T-cell (primary cell): ENCODE measurements at regions of chr5 and their contacts with region 1.

Region 1: DNA sequence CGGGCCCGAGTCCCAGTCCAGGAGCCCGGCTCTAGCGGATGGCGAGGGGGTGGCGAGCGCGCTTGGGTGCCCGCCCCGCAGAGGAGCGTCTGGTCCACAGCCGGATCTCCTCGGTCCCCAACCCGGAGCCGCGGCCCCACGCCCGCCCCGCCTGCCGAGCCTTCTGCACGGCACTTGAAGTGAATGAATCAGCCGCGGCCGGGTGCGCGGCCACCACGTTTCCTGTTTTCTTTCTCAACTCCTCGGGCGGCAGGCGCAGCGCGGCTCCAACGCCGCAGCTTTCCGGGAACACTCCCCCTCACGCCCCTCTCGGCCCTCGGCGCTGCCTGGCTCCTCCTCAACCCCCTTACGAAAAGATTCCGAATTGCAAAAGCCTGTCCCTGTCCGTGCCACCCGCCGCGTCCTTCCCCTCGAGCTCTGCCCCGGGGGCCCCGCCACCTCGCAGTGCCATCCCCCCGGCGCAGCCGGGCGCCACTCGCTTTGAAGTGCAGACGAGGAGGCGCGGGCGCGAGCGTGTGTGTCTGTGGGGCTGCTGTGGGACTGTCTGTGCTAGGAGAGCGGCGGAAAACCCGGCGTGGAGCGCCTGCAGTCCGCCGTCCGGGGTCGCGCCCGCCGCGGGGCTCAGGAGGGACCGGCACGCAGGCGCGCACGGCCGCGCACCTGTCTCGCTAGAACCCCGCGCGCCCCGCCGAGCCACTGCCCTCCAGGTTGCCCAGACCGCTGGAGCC is 456.6 kb downstream of the RAB3C start:
- DNase-seq: peak; percentile 83 to 94 (median 91)
- ATAC-seq: peak; percentile 82 to 86 (median 84)
- H3K4me3 ChIP-seq: peak overlapping the region; percentile 90 to 98
- H3K4me3 Mint-ChIP-seq: peak overlapping the region; percentile 91 to 98 (median 95)
- H3K27ac ChIP-seq: peak overlapping the region; percentile 87
- H3K27ac Mint-ChIP-seq: peak overlapping the region; percentile 100
- H3K4me1 ChIP-seq: peaks cover 16 to 45% of the 10 kb centered on the region in 2 experiments
- H3K4me1 Mint-ChIP-seq: peaks cover 58 to 67% (median 64%) of the 10 kb centered on the region in 3 donors
- H3K27me3 ChIP-seq: no peaks in the 10 kb centered on the region
- H3K27me3 Mint-ChIP-seq: no peaks in the 10 kb centered on the region

Region 2: DNA sequence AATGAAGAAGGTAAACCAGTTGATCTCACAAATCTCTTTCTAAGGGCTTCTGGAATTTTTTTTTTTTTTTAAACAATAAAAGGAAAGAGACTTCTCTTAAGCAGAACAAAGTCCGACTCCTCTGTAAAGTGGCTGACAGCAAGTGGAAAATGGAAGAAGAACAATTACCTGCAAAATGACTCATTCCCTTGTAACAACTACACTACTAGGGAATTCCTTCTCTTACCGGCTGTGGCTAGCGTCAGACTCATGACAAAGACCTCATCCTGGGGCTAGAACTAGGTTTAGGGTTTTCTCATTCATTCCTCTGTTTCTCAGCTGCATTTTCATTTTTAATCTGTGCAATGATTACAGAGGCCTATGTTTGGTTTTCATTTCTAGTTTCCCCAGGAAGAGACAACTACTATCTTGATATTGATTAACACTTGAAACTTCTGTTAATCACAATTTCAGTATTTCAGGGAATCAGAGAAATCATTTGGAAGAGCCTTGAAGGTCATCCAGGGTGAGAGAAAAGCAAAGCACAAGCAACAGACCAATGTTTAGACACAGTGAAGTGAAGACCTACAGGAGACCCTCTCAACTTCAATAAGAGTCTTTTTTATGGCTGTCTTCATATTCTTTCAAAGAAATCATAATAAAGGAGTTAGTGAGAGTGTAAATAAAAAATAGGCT is 18.7 kb before region 1 on chr5:
- CTCF ChIA-PET with region 1: interaction called in 1 of 2 experiments, 3 read pairs
- POLR2A ChIA-PET with region 1: interaction called, 7 to 12 read pairs
- DNase-seq: peak in 1 of 35 experiments; percentile 21
- ATAC-seq: peak in 1 of 4 experiments; percentile 42
- H3K4me3 ChIP-seq: no peak overlapping the region
- H3K4me3 Mint-ChIP-seq: peak overlapping the region in 1 of 3 donors; percentile 31
- H3K27ac ChIP-seq: no peak overlapping the region
- H3K27ac Mint-ChIP-seq: peak overlapping the region; percentile 33 to 53
- H3K4me1 ChIP-seq: peaks cover 7 to 8% of the 10 kb centered on the region in 2 experiments
- H3K4me1 Mint-ChIP-seq: peaks cover 50 to 68% (median 59%) of the 10 kb centered on the region in 3 donors
- H3K27me3 ChIP-seq: no peaks in the 10 kb centered on the region
- H3K27me3 Mint-ChIP-seq: no peaks in the 10 kb centered on the region

Region 3: GRCh38 chr5:59126708-59127573 is 87.5 kb after region 1 on chr5:
- CTCF ChIA-PET with region 1: interaction called, 17 to 53 read pairs
- POLR2A ChIA-PET with region 1: interaction called, 3 to 14 read pairs
- DNase-seq: peak in 11 of 35 experiments; percentile 2 to 71 (median 13)
- ATAC-seq: peak; percentile 7 to 23 (median 16)
- H3K4me3 ChIP-seq: peak overlapping the region; percentile 31 to 59
- H3K4me3 Mint-ChIP-seq: no peak overlapping the region
- H3K27ac ChIP-seq: peak overlapping the region; percentile 82
- H3K27ac Mint-ChIP-seq: no peak overlapping the region
- H3K4me1 ChIP-seq: peaks cover 36 to 59% of the 10 kb centered on the region in 2 experiments
- H3K4me1 Mint-ChIP-seq: peaks cover 7 to 17% (median 15%) of the 10 kb centered on the region in 3 donors
- H3K27me3 ChIP-seq: no peaks in the 10 kb centered on the region
- H3K27me3 Mint-ChIP-seq: no peaks in the 10 kb centered on the region

Region 4: GRCh38 chr5:59133682-59134261 is 94.3 kb after region 1 on chr5:
- CTCF ChIA-PET with region 1: interaction called, 17 to 49 read pairs
- POLR2A ChIA-PET with region 1: interaction called in 1 of 2 experiments, 8 read pairs
- DNase-seq: no peak
- ATAC-seq: no peak
- H3K4me3 ChIP-seq: no peak overlapping the region
- H3K4me3 Mint-ChIP-seq: no peak overlapping the region
- H3K27ac ChIP-seq: no peak overlapping the region
- H3K27ac Mint-ChIP-seq: peak overlapping the region in 1 of 2 donors; percentile 73
- H3K4me1 ChIP-seq: peaks cover 0 to 16% of the 10 kb centered on the region in 2 experiments
- H3K4me1 Mint-ChIP-seq: peaks cover 32 to 43% (median 34%) of the 10 kb centered on the region in 3 donors
- H3K27me3 ChIP-seq: no peaks in the 10 kb centered on the region
- H3K27me3 Mint-ChIP-seq: no peaks in the 10 kb centered on the region

Region 5: DNA sequence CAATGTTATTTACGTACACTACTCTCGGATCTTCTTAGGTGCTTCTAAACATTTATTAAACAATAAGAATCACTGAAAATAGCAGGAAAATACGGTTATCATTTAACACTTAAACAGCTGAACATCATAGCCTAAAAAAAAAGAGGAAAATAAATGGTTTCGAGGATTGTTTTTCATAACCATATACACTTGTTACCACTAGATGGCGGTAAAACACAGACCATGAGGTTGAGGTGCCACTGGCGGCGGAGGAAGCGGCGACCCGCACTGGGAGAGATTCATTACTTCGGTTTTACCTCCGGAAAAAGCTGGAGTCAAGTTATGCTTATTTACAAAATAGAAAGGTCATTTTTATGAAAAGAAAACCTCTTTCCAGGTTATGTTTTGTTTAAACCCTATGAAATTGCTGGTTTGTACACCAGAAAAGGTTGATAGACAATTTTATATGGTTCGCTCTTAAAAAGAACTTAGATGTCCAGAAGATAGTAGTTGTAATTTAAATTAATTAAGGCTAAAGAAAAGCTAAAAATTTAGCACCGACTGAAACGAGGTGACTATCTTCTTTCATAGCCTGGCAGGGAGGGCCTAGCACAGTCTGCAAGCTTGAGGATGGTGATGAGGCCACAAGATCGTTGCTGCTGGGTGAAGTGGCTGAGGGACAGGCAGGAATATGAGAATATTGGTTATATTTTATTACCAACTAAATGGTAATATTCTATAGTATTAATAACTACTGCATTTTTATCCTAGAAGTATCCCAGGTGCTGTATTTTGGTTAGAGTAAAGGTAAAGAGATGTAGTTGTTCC is 149.2 kb after region 1 on chr5:
- CTCF ChIA-PET with region 1: interaction called, 3 to 14 read pairs
- POLR2A ChIA-PET with region 1: no interaction called
- DNase-seq: peak; percentile 6 to 81 (median 46)
- ATAC-seq: peak; percentile 59 to 73 (median 68)
- H3K4me3 ChIP-seq: peak overlapping the region in 1 of 2 donors; percentile 26
- H3K4me3 Mint-ChIP-seq: peak overlapping the region in 1 of 3 donors; percentile 3
- H3K27ac ChIP-seq: no peak overlapping the region
- H3K27ac Mint-ChIP-seq: peak overlapping the region in 1 of 2 donors; percentile 44
- H3K4me1 ChIP-seq: peaks cover 0 to 2% of the 10 kb centered on the region in 2 experiments
- H3K4me1 Mint-ChIP-seq: peaks cover 4 to 7% (median 6%) of the 10 kb centered on the region in 3 donors
- H3K27me3 ChIP-seq: peaks cover 0 to 9% of the 10 kb centered on the region in 2 experiments
- H3K27me3 Mint-ChIP-seq: peaks cover 11 to 19% of the 10 kb centered on the region in 2 donors